H1 (cell line): ENCODE measurements at regions of chr15 and their contacts with region 1.

Region 1: GRCh38 chr15:74763416-74763815 is 14.8 kb downstream of the CYP1A2 start:
- DNase-seq: no peak
- H3K4me3 ChIP-seq: no peak overlapping the region
- H3K27ac ChIP-seq: no peak overlapping the region
- H3K4me1 ChIP-seq: peaks cover 0 to 8% (median 3%) of the 10 kb centered on the region in 4 experiments; a peak in 4 of 7 replicates
- H3K27me3 ChIP-seq: no peaks in the 10 kb centered on the region; a peak in 1 of 7 replicates
- CTCF ChIP-seq: no peak
- EP300 ChIP-seq: no peak
- POLR2A ChIP-seq: no peak
- RAD21 ChIP-seq: no peak

Region 2: GRCh38 chr15:74396445-74397238 is 366.8 kb before region 1 on chr15:
- CTCF ChIA-PET with region 1: no interaction called
- POLR2A ChIA-PET with region 1: no interaction called
- DNase-seq: no peak
- H3K4me3 ChIP-seq: no peak overlapping the region
- H3K27ac ChIP-seq: no peak overlapping the region
- H3K4me1 ChIP-seq: peaks cover 0 to 12% (median 7%) of the 10 kb centered on the region in 4 experiments; a peak in 4 of 7 replicates
- H3K27me3 ChIP-seq: no peaks in the 10 kb centered on the region
- CTCF ChIP-seq: no peak
- EP300 ChIP-seq: no peak
- POLR2A ChIP-seq: no peak
- RAD21 ChIP-seq: no peak

Region 3: GRCh38 chr15:74635228-74635627 is 128.2 kb before region 1 on chr15:
- CTCF ChIA-PET with region 1: interaction called, 1,439 read pairs
- POLR2A ChIA-PET with region 1: interaction called, 81 read pairs
- DNase-seq: peak in 1 of 2 experiments; percentile 84
- H3K4me3 ChIP-seq: no peak overlapping the region
- H3K27ac ChIP-seq: no peak overlapping the region
- H3K4me1 ChIP-seq: no peaks in the 10 kb centered on the region
- H3K27me3 ChIP-seq: no peaks in the 10 kb centered on the region
- CTCF ChIP-seq: peak; percentile 92 to 97 (median 97)
- EP300 ChIP-seq: no peak
- POLR2A ChIP-seq: no peak
- RAD21 ChIP-seq: peak; percentile 97 to 98

Region 4: DNA sequence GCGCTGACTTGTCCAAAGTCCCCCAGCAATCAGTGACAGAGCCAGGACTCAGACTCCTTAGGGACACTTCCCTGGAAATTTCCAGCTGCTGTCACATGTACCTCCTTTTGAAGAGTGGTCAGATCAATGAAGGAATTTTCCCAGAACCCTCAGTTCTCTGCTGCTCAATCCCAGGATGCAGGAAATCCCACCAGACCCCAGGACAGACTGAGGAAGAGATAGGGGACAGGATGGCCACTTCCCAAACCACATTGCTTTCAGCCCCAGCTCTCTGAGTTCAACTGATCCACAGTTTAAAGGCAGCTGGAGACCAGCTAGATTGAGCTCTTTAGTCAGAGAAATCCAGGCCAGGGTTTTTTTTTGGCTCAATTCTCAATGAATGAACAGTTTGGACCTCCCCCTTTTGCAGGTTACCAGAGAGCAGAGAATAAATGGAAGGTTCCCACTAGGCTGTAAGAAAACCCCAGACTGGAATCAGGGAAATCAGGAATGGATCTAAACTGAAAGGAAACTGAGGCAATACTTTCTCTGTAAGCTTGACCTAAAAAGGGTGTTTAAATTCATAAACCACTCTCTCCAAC is 39.6 kb before region 1 on chr15:
- CTCF ChIA-PET with region 1: interaction called, 39 read pairs
- POLR2A ChIA-PET with region 1: interaction called, 46 read pairs
- DNase-seq: peak in 1 of 2 experiments; percentile 49
- H3K4me3 ChIP-seq: no peak overlapping the region
- H3K27ac ChIP-seq: no peak overlapping the region
- H3K4me1 ChIP-seq: peaks cover 0 to 5% (median 0%) of the 10 kb centered on the region in 4 experiments; a peak in 3 of 7 replicates
- H3K27me3 ChIP-seq: peaks cover 11 to 31% (median 26%) of the 10 kb centered on the region in 4 experiments
- CTCF ChIP-seq: no peak
- EP300 ChIP-seq: no peak
- POLR2A ChIP-seq: no peak
- RAD21 ChIP-seq: no peak

Region 5: GRCh38 chr15:74752491-74753020 is 10.9 kb before region 1 on chr15:
- CTCF ChIA-PET with region 1: interaction called, 69 read pairs
- POLR2A ChIA-PET with region 1: interaction called, 47 read pairs
- DNase-seq: no peak
- H3K4me3 ChIP-seq: no peak overlapping the region
- H3K27ac ChIP-seq: no peak overlapping the region
- H3K4me1 ChIP-seq: peaks cover 0 to 4% (median 0%) of the 10 kb centered on the region in 4 experiments; a peak in 2 of 7 replicates
- H3K27me3 ChIP-seq: peaks cover 0 to 4% (median 2%) of the 10 kb centered on the region in 4 experiments; a peak in 2 of 7 replicates
- CTCF ChIP-seq: no peak
- EP300 ChIP-seq: no peak
- POLR2A ChIP-seq: no peak
- RAD21 ChIP-seq: no peak

Region 6: GRCh38 chr15:74799856-74800547 is 36.6 kb after region 1 on chr15:
- CTCF ChIA-PET with region 1: interaction called, 543 read pairs
- POLR2A ChIA-PET with region 1: interaction called, 13 read pairs
- DNase-seq: peak; percentile 34 to 96
- H3K4me3 ChIP-seq: no peak overlapping the region
- H3K27ac ChIP-seq: no peak overlapping the region
- H3K4me1 ChIP-seq: peaks cover 0 to 5% (median 2%) of the 10 kb centered on the region in 4 experiments; a peak in 3 of 7 replicates
- H3K27me3 ChIP-seq: no peaks in the 10 kb centered on the region
- CTCF ChIP-seq: peak; percentile 96 to 99 (median 99)
- EP300 ChIP-seq: peak in 1 of 2 experiments; percentile 23; a peak in 1 of 3 replicates
- POLR2A ChIP-seq: no peak
- RAD21 ChIP-seq: peak; percentile 88 to 91